ENCODE measurements at regions of chr3 and their contacts with region 1.

Region 1: DNA sequence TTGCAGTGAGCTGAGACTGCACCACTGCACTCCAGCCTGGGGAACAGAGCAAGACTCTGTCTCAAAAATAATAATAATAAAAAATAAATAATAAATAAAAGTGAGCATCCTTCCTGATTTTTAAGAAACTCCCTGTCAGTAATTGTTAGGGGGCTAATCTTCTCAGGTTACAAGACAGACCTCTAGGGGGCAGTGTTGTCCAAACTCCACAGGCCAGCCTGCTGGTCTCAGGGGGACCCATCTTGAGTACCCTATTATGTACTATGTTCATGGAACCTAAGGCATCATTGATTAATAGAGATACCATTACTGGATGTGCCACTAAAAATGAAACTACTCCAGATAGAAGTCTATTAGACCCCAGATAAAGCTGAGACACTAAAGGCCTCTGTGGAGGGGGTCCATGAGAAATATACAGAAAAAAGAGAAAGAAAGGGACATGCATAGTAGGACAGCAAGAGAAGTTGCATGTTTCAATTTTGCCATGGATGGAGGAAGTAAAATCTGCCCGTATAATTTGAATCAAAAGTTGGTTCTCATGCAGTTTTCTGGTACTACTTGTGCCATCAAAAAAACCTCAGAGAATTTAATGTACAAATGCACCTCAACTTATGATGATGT is 85.5 kb upstream of the CDV3 start:
- DNase-seq: peak in 8 of 9 donors; percentile 40 to 67 (median 50)
- ATAC-seq: peak; percentile 72
- H3K4me3 ChIP-seq: no peak overlapping the region
- H3K4me3 Mint-ChIP-seq: peak overlapping the region in 6 of 10 donors; percentile 5 to 73 (median 32)
- H3K27ac ChIP-seq: peak overlapping the region; percentile 34
- H3K27ac Mint-ChIP-seq: peak overlapping the region in 8 of 9 donors; percentile 90 to 98 (median 96)
- H3K4me1 ChIP-seq: peaks cover 22 to 47% of the 10 kb centered on the region in 2 donors
- H3K4me1 Mint-ChIP-seq: peaks cover 22 to 52% (median 51%) of the 10 kb centered on the region in 7 donors
- H3K27me3 ChIP-seq: no peaks in the 10 kb centered on the region
- H3K27me3 Mint-ChIP-seq: no peaks in the 10 kb centered on the region

Region 2: DNA sequence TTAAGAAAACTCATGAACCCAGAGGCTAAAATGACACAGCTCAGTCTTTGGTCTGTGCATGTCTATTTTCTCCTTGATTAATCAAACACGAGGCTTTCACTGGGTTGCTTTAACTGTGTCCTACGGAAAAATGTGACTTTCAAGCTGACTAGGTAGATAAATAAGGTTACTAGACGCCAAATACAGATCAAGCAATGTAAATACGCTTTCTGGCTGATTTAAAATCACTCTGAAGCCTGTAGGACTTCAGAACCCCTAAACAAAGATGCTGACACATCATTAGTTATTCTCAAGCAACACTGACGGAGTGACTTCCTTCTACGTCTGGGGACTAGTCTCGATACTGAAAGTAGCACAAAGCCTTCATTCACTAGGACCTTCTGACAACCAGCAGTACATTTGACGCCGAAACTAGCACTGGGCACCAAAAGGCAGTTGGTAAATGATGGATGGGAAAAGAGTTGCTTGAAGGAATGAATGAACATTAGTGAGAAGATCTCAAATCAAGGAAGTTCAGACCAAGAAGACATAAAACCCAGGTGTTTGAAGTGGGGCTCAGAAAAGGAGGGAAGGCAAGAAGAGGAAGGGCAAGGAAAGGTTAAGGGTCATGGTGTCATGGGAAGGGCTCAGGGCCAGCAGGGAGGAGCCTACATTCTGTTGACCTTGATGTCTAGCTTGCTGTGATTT is 18.3 kb after region 1 on chr3:
- CTCF ChIA-PET with region 1: interaction called, 8 read pairs
- POLR2A ChIA-PET with region 1: interaction called, 10 read pairs
- intact Hi-C with region 1: loop called (anchors 1 to 2 kb)
- DNase-seq: peak in 7 of 9 donors; percentile 23 to 60 (median 50)
- ATAC-seq: peak; percentile 93
- H3K4me3 ChIP-seq: peak overlapping the region; percentile 1
- H3K4me3 Mint-ChIP-seq: peak overlapping the region; percentile 71 to 93 (median 82)
- H3K27ac ChIP-seq: peak overlapping the region; percentile 65
- H3K27ac Mint-ChIP-seq: peak overlapping the region; percentile 88 to 97 (median 94)
- H3K4me1 ChIP-seq: no peaks in the 10 kb centered on the region
- H3K4me1 Mint-ChIP-seq: peaks cover 10 to 19% (median 17%) of the 10 kb centered on the region in 7 donors
- H3K27me3 ChIP-seq: no peaks in the 10 kb centered on the region
- H3K27me3 Mint-ChIP-seq: no peaks in the 10 kb centered on the region

Region 3: GRCh38 chr3:133608388-133608787 is 120.4 kb after region 1 on chr3:
- CTCF ChIA-PET with region 1: no interaction called
- POLR2A ChIA-PET with region 1: no interaction called
- intact Hi-C with region 1: loop called in 1 of 2 experiments (anchors 1 kb)
- DNase-seq: no peak
- ATAC-seq: no peak
- H3K4me3 ChIP-seq: no peak overlapping the region
- H3K4me3 Mint-ChIP-seq: no peak overlapping the region
- H3K27ac ChIP-seq: no peak overlapping the region
- H3K27ac Mint-ChIP-seq: no peak overlapping the region
- H3K4me1 ChIP-seq: no peaks in the 10 kb centered on the region
- H3K4me1 Mint-ChIP-seq: peaks cover 0 to 2% (median 0%) of the 10 kb centered on the region in 7 donors
- H3K27me3 ChIP-seq: no peaks in the 10 kb centered on the region
- H3K27me3 Mint-ChIP-seq: no peaks in the 10 kb centered on the region

Region 4: DNA sequence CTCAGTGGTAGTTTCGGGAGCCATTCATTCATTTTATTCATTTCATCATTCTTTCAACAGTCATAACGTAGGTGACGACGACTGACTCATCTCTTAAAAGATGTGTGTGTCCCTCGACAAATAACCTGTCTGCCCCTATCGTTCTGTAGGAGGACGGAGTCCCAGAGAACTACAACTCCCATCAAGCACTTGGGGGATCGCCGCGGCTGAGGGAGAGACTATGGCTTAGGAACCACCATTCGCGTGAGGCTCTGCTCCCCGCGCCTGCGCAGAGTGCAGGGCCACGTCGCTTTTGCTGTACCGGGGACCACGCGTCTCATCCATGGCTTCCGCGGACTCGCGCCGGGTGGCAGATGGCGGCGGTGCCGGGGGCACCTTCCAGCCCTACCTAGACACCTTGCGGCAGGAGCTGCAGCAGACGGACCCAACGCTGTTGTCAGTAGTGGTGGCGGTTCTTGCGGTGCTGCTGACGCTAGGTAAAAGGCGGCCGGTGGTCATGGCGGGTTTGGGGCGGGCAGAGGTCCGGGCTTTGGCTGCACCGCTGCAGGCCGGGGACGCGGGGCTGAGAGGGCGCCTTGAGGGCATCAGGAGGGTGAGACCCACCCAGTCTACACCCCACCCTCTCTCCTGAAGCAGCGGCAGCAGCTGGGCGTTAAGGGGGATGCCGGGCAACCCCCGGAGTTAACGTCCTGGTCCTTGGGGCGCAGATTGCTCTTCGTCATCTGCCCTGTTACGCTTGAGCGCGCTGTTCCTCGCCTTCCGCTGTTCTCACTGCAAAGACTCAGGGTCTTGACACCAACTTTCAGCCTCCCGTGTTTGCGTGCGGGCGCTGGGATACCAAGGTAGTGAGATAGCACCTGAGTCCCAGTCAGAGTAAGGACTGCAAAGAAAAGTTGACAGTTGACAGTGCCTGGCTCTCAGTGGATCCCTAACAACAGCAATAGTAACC is 317.8 kb after region 1 on chr3 and contains the start of gene SRPRB:
- CTCF ChIA-PET with region 1: no interaction called
- POLR2A ChIA-PET with region 1: no interaction called
- intact Hi-C with region 1: loop called (anchors 1 to 5 kb)
- DNase-seq: peak; percentile 91 to 96 (median 94)
- ATAC-seq: peak; percentile 98
- H3K4me3 ChIP-seq: peak within 1 kb of the TSS; percentile 76
- H3K4me3 Mint-ChIP-seq: peak within 1 kb of the TSS; percentile 90 to 99 (median 98)
- H3K27ac ChIP-seq: peak within 1 kb of the TSS; percentile 81
- H3K27ac Mint-ChIP-seq: peak within 1 kb of the TSS; percentile 70 to 98 (median 95)
- H3K4me1 ChIP-seq: peaks cover 7 to 8% of the 10 kb centered on the region in 2 donors
- H3K4me1 Mint-ChIP-seq: peaks cover 16 to 50% (median 34%) of the 10 kb centered on the region in 7 donors
- H3K27me3 ChIP-seq: no peaks in the 10 kb centered on the region
- H3K27me3 Mint-ChIP-seq: peaks cover 0 to 7% (median 5%) of the 10 kb centered on the region in 5 donors
- total RNA-seq, gene SRPRB: 27.4 to 63.3 (median 34.6) TPM

Region 5: DNA sequence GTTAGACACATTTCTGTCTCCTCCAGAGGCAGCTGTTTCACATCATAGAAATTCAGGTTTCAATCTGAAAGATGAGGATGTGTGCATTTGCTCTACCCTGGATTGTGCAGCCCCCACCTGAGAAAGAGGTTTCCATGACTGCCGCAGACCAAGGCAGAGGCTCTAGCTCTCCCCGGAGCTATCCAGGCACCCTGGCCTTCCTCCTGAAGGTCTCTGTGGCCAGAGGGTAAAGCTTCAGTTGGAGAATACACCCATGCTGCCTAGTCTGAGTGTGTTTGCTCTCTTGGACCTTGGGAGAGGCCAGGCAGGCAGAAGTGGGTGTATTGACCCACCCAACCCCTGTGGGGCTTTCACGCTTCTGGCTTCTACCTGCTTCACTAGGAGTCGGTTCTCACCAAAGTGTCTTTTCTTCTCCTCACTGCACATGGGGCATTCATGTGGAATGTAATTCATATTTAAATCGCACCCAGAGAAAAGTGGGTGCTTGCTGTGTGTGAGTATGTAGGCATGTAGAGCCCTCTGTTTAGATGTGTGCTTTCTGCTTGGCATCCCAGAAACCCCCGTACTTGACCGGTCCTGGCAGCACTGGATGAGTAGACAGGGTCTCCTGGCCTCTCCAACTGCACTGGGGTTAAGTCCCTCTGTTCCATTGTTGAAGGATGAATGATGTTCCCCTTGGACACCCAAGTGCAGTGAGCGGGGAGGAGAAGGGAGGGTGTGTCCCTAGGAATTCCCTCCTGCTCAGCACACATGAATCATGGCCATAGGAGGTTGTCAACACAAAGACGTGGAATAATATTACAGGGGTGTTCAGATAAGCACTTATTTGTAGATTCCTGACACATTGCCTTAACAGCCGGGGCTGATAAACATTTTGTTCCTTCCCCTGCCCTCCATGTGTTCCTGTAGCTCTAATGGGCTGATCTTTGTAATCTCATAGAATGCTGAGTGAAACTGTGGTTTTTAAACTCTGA is 427.9 kb after region 1 on chr3:
- CTCF ChIA-PET with region 1: no interaction called
- POLR2A ChIA-PET with region 1: no interaction called
- intact Hi-C with region 1: loop called in 1 of 2 experiments (anchors 2 kb)
- DNase-seq: no peak
- ATAC-seq: no peak
- H3K4me3 ChIP-seq: no peak overlapping the region
- H3K4me3 Mint-ChIP-seq: no peak overlapping the region
- H3K27ac ChIP-seq: no peak overlapping the region
- H3K27ac Mint-ChIP-seq: no peak overlapping the region
- H3K4me1 ChIP-seq: no peaks in the 10 kb centered on the region
- H3K4me1 Mint-ChIP-seq: no peaks in the 10 kb centered on the region
- H3K27me3 ChIP-seq: peaks cover 0 to 8% of the 10 kb centered on the region in 2 donors
- H3K27me3 Mint-ChIP-seq: peaks cover 22 to 39% (median 25%) of the 10 kb centered on the region in 5 donors

Measured in naive thymus-derived CD4-positive, alpha-beta T cell (primary cell).